ENCODE measurements at regions of chr13 and their contacts with region 1.

Region 1: DNA sequence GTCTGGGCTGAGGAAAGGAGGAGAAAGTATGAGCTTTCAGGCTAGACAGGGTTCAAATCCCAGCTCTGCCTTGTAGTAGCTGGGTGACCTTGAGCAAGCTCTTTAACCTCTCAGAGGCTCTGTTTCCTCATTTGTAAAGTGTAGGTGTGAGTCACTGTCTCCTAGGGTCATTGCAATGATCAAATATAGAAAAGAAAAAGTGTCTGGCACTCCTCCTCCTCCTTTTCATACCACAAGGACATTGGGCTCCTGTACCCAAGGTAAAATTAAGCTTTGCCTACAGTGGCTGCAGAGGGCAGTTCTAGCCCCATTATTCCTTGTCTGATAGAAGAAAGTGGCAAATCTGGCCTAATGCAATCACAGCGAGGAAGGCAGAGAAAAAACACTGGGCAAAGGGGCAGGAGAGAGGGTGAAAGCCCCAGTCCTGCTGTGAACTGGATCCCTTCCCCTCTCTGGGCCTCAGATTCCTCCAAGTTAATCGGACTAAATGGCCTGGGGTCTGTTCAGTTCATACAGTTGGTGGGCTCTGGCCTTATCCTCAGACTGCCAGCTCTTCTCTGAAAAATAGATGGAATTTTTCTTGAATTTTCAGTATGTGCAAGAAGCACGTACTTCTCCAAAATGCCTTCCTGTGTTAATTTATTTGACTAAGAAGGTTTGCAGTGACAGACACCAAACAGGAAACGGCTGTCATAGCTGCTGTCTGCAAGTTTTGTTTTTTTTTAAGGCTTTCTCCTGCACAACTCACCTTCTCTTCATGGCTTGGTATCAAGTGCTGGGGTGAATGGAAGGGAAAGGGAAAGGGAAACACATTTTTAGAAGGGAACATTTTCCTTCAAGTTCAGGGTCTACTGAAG is 35.3 kb downstream of the RGCC start:
- DNase-seq: peak; percentile 57
- ATAC-seq: peak; percentile 76
- H3K4me3 ChIP-seq: peak overlapping the region in 2 of 5 experiments; percentile 1 to 16
- H3K4me3 Mint-ChIP-seq: peak overlapping the region; percentile 77
- H3K27ac ChIP-seq: peak overlapping the region; percentile 74 to 75
- H3K27ac Mint-ChIP-seq: peak overlapping the region; percentile 94
- H3K4me1 ChIP-seq: peaks cover 23 to 34% of the 10 kb centered on the region in 2 donors
- H3K4me1 Mint-ChIP-seq: peaks cover 40% of the 10 kb centered on the region
- H3K27me3 ChIP-seq: no peaks in the 10 kb centered on the region
- H3K27me3 Mint-ChIP-seq: no peaks in the 10 kb centered on the region
- CTCF ChIP-seq: no peak

Region 2: DNA sequence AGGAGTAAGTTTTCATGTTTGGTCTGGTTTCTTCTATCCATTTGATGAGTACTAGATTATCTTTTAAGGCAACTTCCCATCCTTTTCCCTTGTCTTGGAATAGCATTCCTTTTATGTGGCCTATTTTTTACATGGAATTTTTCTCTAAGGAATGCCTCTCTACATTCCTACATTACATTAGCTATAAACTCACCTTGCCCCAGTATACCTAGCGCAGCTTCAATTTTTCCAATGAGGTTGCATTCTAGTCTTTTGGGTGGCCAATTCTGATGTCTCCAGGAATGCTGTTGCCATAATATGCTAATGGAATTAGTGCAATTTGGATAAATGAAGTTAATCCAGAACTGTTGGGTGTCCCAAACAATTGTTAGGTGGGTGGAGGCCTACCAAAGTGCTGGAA is 393.9 kb before region 1 on chr13:
- CTCF ChIA-PET with region 1: no interaction called
- POLR2A ChIA-PET with region 1: no interaction called
- intact Hi-C with region 1: no loop called
- DNase-seq: no peak
- ATAC-seq: no peak
- H3K4me3 ChIP-seq: no peak overlapping the region
- H3K4me3 Mint-ChIP-seq: no peak overlapping the region
- H3K27ac ChIP-seq: no peak overlapping the region
- H3K27ac Mint-ChIP-seq: no peak overlapping the region
- H3K4me1 ChIP-seq: no peaks in the 10 kb centered on the region
- H3K4me1 Mint-ChIP-seq: no peaks in the 10 kb centered on the region
- H3K27me3 ChIP-seq: no peaks in the 10 kb centered on the region
- H3K27me3 Mint-ChIP-seq: peaks cover 2% of the 10 kb centered on the region
- CTCF ChIP-seq: no peak

Region 3: GRCh38 chr13:41465241-41465847 is 27.3 kb before region 1 on chr13:
- CTCF ChIA-PET with region 1: interaction called, 3 read pairs
- POLR2A ChIA-PET with region 1: no interaction called
- intact Hi-C with region 1: loop called (anchors 2 kb)
- DNase-seq: peak; percentile 74
- ATAC-seq: peak; percentile 82
- H3K4me3 ChIP-seq: no peak overlapping the region
- H3K4me3 Mint-ChIP-seq: peak overlapping the region; percentile 62
- H3K27ac ChIP-seq: peak overlapping the region; percentile 77 to 80
- H3K27ac Mint-ChIP-seq: peak overlapping the region; percentile 80
- H3K4me1 ChIP-seq: peaks cover 46% of the 10 kb centered on the region in 2 donors
- H3K4me1 Mint-ChIP-seq: peaks cover 50% of the 10 kb centered on the region
- H3K27me3 ChIP-seq: peaks cover 0 to 3% (median 0%) of the 10 kb centered on the region in 4 experiments
- H3K27me3 Mint-ChIP-seq: peaks cover 3% of the 10 kb centered on the region
- CTCF ChIP-seq: no peak

Region 4: GRCh38 chr13:41502673-41503072 is 10.0 kb after region 1 on chr13:
- CTCF ChIA-PET with region 1: interaction called, 4 read pairs
- POLR2A ChIA-PET with region 1: interaction called, 3 read pairs
- intact Hi-C with region 1: loop called (anchors 1 kb)
- DNase-seq: peak; percentile 69
- ATAC-seq: peak; percentile 67
- H3K4me3 ChIP-seq: no peak overlapping the region
- H3K4me3 Mint-ChIP-seq: peak overlapping the region; percentile 68
- H3K27ac ChIP-seq: no peak overlapping the region
- H3K27ac Mint-ChIP-seq: no peak overlapping the region
- H3K4me1 ChIP-seq: peaks cover 44 to 45% of the 10 kb centered on the region in 2 donors
- H3K4me1 Mint-ChIP-seq: peaks cover 50% of the 10 kb centered on the region
- H3K27me3 ChIP-seq: no peaks in the 10 kb centered on the region
- H3K27me3 Mint-ChIP-seq: no peaks in the 10 kb centered on the region
- CTCF ChIP-seq: no peak

Region 5: DNA sequence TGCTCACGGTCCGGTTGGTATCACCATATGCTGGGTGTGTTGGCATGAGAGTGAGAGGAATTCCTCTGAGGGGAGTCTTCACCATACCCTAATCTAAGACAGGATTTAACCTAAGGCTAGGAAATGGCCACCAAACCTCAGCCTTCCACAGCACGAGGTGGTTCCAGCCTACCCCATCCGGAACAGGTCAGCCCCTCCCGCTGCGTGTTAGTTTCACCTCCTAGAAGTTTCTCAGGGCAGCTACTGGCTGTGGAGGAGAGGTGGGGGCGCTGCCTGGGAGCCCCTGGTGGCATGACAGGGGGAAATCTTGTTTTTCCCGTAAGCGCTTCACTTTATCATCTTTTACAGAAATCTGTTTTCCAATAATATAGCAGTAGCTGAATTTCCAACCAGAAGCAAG is 19.8 kb after region 1 on chr13:
- CTCF ChIA-PET with region 1: no interaction called
- POLR2A ChIA-PET with region 1: no interaction called
- intact Hi-C with region 1: loop called (anchors 2 kb)
- DNase-seq: peak; percentile 57
- ATAC-seq: peak; percentile 96
- H3K4me3 ChIP-seq: no peak overlapping the region
- H3K4me3 Mint-ChIP-seq: no peak overlapping the region
- H3K27ac ChIP-seq: no peak overlapping the region
- H3K27ac Mint-ChIP-seq: peak overlapping the region; percentile 15
- H3K4me1 ChIP-seq: peaks cover 0 to 14% of the 10 kb centered on the region in 2 donors
- H3K4me1 Mint-ChIP-seq: peaks cover 11% of the 10 kb centered on the region
- H3K27me3 ChIP-seq: no peaks in the 10 kb centered on the region
- H3K27me3 Mint-ChIP-seq: no peaks in the 10 kb centered on the region
- CTCF ChIP-seq: peak; percentile 7